Ascending aorta (tissue), 2 donors: ENCODE measurements at regions of chrX and their contacts with region 1.

Region 1: DNA sequence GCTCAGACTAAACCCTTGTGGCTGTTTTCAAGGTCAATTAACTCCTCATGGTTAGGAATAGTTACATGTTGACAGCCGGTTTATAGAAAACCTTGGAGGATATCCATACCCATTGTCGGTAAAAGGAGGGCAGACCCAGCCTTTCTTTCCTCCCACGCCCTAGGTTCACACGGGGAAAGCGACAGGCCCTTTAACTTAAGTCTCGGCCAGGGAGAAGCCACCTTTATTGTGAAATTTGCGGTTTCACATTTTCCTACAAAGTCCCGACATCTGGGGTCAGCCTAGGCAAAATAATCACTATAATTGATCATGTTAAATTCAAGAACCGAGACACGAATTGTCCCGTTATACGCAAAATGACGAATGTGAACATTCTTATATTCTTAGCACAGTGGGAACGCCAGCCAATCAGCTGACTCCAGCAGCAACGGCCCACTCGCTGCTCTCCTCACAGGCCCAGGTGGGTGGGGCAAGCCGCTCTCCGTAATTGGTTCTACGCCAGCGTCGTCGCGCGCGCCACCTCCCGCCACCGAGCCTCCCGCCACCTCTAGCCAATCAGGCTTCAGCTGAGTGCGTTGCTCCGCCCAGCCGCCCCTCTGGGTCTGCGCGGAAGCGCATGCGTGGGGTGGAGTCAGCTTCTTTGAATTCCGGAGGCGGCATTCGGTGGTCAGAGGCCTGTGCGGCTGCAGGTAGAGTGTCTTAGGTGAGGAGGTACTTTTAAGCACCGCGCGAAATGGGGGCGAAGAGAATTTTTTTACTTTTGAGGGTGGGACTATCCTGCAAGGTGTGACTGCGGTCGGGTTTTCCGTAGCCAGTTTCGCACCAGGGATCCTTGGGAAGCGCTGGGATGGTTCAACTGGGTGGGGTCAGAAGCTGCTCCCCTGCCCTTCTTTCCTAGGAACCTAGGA is at the start of gene CENPI:
- DNase-seq: peak; percentile 83 to 95
- H3K4me3 ChIP-seq: peak within 1 kb of the TSS; percentile 46 to 55
- H3K27ac ChIP-seq: peak within 1 kb of the TSS; percentile 68 to 77
- H3K4me1 ChIP-seq: no peaks in the 10 kb centered on the region
- H3K27me3 ChIP-seq: no peaks in the 10 kb centered on the region
- CTCF ChIP-seq: no peak
- total RNA-seq, gene CENPI: not detected

Region 2: DNA sequence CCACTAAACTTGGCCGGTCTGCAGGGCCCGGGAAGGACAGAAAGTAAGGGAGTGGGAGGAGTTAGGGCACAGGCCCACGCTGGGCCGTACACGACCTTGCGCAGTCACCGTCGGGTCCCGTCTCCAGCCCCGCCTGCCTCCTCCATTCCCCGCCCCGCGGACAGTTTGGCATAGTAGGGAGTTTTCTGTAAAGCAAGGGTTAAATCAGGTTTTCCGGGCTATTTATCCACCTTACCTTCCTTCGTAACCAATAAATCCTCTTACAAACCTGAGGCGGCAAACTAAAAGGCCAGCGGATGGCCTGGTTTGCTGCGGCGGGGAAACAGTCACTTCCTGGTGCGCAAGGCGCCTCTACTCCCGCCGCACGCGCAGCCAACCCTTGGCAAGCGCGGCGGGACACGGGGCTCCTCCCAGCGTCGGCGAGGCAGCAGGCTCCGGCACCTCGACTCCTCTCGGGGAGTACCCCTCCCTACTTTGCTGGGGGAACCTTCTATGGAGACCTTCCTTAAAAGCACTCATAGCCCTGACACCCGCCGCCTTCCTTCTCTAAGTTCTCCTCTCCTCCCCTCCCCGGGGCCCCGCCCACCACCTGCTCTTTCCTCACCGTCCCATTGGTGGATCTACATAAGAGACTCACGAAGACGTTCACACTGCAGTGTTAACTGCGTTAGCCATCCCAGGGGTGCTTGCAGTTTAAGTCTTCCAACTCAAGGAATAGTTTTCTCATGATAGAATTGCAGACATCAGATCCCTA is 46.1 kb before region 1 on chrX and contains the start of gene TRMT2B:
- intact Hi-C with region 1: loop called (anchors 1 kb)
- DNase-seq: peak; percentile 52 to 90
- H3K4me3 ChIP-seq: peak within 1 kb of the TSS; percentile 53 to 67
- H3K27ac ChIP-seq: peak within 1 kb of the TSS; percentile 71 to 88
- H3K4me1 ChIP-seq: peaks cover 0 to 3% of the 10 kb centered on the region in 2 donors
- H3K27me3 ChIP-seq: no peaks in the 10 kb centered on the region
- CTCF ChIP-seq: no peak
- total RNA-seq, gene TRMT2B: 4.5 TPM

Region 3: DNA sequence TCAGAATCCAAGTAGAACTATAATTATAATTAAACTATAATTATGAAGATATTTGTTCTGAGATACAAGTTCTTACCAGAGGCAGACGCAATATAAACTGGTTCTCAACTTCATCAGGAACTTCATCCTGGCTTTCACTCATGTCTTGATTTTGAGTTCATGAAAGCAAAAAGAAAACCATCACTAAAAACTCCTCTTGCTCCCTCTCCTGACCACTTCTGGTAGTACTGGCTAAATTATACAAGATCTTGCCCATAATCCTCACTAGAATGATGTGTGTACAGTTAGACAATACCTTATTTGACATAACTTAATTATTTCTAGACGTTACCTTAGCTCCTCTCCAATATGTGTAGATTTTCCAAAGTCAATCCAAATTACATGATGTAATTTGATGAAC is 189.6 kb after region 1 on chrX:
- intact Hi-C with region 1: no loop called
- DNase-seq: no peak
- H3K4me3 ChIP-seq: no peak overlapping the region
- H3K27ac ChIP-seq: no peak overlapping the region
- H3K4me1 ChIP-seq: no peaks in the 10 kb centered on the region
- H3K27me3 ChIP-seq: no peaks in the 10 kb centered on the region
- CTCF ChIP-seq: peak; percentile 8 to 53 (median 43)